ENCODE measurements at regions of chr7 and their contacts with region 1.

Region 1: DNA sequence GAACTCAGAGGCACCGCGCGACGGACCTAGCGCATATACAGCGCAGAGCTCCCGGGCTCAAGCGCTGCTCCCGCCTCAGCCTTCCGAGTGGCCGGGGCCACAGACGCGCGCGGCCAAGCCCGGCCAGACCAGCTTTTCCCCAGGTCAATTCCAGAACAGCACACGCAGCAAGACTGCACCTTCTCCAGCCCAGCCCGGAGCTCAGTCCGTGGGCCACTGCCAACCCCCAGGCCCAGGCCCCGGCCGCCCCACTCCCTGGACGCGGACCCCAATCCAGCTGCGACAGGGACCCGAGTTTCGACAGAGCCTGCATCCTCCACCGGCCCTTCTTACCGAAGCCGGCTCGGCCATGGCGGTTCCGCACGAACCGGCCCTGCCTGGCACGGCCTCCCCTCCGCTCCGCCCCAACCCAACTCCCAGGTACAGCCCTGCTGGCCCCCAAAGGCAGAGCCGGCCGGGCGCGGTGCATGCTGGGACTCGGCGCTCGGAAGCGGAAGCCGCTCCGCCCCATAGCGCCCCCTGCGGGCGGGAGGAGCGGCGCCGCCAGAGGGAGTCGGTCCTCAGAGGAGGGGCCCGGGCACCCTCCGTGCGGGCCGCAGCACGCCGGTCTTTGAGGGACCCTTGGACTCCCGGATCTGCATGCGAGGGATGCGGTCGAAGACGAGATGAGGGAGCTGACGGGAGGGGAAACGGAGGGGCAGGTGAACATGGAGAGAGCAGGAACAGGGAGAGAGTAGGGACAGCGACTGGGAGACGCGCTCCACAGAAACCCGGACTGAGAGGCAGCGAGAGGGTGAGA is at the start of gene ZNF425:
- DNase-seq: peak; percentile 99
- H3K4me3 ChIP-seq: peak within 1 kb of the TSS; percentile 60 to 96
- H3K27ac ChIP-seq: peak within 1 kb of the TSS; percentile 83 to 90
- H3K4me1 ChIP-seq: peaks cover 8% of the 10 kb centered on the region in 2 experiments; a peak in 3 of 4 replicates
- H3K27me3 ChIP-seq: no peaks in the 10 kb centered on the region
- CTCF ChIP-seq: peak; percentile 97
- EP300 ChIP-seq: peak in 1 of 2 experiments; percentile 6; a peak in 2 of 4 replicates
- RAD21 ChIP-seq: peak; percentile 35
- polyA plus RNA-seq, gene ZNF425: 1.4 and 1.6 TPM in 2 replicates

Region 2: DNA sequence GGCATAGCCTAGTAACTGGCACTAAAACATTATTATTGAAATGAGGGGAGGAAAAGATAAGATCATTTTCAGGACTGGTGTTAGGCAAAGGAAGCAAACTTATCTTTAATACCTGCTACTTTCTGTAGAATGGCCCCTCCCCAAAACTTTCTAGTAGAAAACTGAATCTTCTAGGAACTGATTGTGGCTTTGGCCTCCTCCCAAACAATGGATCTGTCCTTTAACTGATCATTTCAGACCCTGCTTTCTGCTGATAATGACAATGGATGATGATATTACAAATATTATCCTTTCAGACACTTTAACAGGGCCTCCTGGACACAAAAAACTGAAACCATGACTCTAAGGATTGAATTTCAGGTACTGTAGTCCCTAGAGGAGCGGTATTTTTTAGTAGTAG is 297.1 kb before region 1 on chr7:
- CTCF ChIA-PET with region 1: no interaction called
- POLR2A ChIA-PET with region 1: no interaction called
- DNase-seq: no peak
- H3K4me3 ChIP-seq: no peak overlapping the region
- H3K27ac ChIP-seq: no peak overlapping the region
- H3K4me1 ChIP-seq: no peaks in the 10 kb centered on the region
- H3K27me3 ChIP-seq: no peaks in the 10 kb centered on the region
- CTCF ChIP-seq: no peak
- EP300 ChIP-seq: no peak
- RAD21 ChIP-seq: no peak

Region 3: GRCh38 chr7:149071641-149072437 is 54.2 kb before region 1 on chr7:
- CTCF ChIA-PET with region 1: interaction called, 14 read pairs
- POLR2A ChIA-PET with region 1: no interaction called
- DNase-seq: peak; percentile 61
- H3K4me3 ChIP-seq: no peak overlapping the region
- H3K27ac ChIP-seq: no peak overlapping the region
- H3K4me1 ChIP-seq: no peaks in the 10 kb centered on the region
- H3K27me3 ChIP-seq: no peaks in the 10 kb centered on the region
- CTCF ChIP-seq: no peak
- EP300 ChIP-seq: no peak
- RAD21 ChIP-seq: 0 out of 2 replicates have a peak, but pooled peaks have one; percentile 39

Region 4: DNA sequence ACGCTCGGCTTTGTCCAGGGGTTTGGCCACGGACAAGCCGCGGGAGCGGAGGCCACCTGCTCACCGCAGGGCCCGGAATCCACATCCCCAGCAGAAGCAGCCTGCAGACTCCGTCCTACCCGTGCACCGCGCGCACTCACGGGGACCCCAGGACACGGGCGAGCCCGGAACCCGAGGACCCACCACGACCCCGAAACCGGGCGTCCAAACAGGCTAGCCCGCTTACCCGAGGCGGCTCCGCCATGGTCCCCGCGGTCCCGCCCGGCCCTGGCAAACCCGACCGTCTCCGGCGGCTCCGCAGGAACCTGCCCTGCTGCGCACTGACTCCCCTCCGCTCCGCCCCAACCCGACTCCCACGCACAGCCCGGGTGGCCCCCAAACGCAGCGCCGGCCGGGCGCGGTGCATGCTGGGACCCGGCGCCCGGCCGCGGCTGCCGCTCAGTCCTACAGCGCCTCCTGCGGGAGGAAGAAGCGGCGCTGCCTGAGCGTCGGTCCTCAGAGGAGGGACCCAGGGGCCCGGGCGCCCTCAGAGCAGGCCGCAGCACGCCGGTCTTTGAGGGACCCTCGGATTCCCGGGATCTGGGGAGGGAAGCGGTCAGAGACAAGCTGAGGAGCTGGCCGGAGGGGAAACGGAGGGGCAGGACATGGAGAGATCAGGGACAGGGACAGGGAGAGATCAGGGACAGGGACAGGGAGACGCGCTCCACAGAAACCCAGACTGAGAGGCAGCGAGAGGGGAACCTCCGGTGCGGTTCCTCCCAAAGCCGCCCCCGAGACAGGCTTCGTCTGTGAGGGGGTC is 35.5 kb before region 1 on chr7 and contains the start of gene ZNF786:
- CTCF ChIA-PET with region 1: interaction called, 10 read pairs
- POLR2A ChIA-PET with region 1: interaction called, 3 read pairs
- DNase-seq: peak; percentile 99
- H3K4me3 ChIP-seq: peak within 1 kb of the TSS; percentile 67 to 94
- H3K27ac ChIP-seq: peak within 1 kb of the TSS; percentile 83 to 91
- H3K4me1 ChIP-seq: no peaks in the 10 kb centered on the region; a peak in 1 of 4 replicates
- H3K27me3 ChIP-seq: no peaks in the 10 kb centered on the region
- CTCF ChIP-seq: peak; percentile 95
- EP300 ChIP-seq: 0 out of 4 replicates have a peak, but pooled peaks have one; percentile 6 to 23
- RAD21 ChIP-seq: peak; percentile 88
- polyA plus RNA-seq, gene ZNF786: 5.0 and 5.9 TPM in 2 replicates

Region 5: GRCh38 chr7:149099058-149099457 is 27.0 kb before region 1 on chr7:
- CTCF ChIA-PET with region 1: interaction called, 10 read pairs
- POLR2A ChIA-PET with region 1: interaction called, 4 read pairs
- DNase-seq: no peak
- H3K4me3 ChIP-seq: no peak overlapping the region
- H3K27ac ChIP-seq: no peak overlapping the region
- H3K4me1 ChIP-seq: no peaks in the 10 kb centered on the region
- H3K27me3 ChIP-seq: no peaks in the 10 kb centered on the region
- CTCF ChIP-seq: no peak
- EP300 ChIP-seq: no peak
- RAD21 ChIP-seq: no peak

Region 6: GRCh38 chr7:149104749-149105148 is 21.3 kb before region 1 on chr7:
- CTCF ChIA-PET with region 1: interaction called, 13 read pairs
- POLR2A ChIA-PET with region 1: interaction called, 4 read pairs
- DNase-seq: no peak
- H3K4me3 ChIP-seq: no peak overlapping the region
- H3K27ac ChIP-seq: no peak overlapping the region
- H3K4me1 ChIP-seq: no peaks in the 10 kb centered on the region
- H3K27me3 ChIP-seq: no peaks in the 10 kb centered on the region
- CTCF ChIP-seq: no peak
- EP300 ChIP-seq: no peak
- RAD21 ChIP-seq: no peak

Region 7: DNA sequence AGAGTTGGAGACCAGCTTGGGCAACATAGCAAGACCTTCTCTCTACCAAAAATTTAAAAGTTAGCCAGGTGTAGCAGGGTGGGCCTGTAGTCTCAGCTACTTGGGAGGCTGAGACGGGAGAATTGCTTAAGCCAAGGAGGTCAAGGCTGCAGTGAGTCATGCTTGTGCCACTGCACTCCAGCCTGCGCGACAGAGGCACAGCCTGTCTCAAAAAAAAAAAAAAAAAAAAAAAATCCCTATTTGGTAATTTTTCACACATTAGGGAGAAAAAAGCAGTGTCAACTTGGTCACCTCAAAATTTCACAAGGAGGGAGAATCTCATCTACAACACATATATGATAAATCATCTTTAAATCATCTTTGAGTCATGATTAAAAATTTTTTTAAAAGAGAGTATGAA is 14.8 kb after region 1 on chr7:
- CTCF ChIA-PET with region 1: interaction called, 73 read pairs
- POLR2A ChIA-PET with region 1: interaction called, 37 read pairs
- DNase-seq: no peak
- H3K4me3 ChIP-seq: no peak overlapping the region
- H3K27ac ChIP-seq: no peak overlapping the region
- H3K4me1 ChIP-seq: no peaks in the 10 kb centered on the region; a peak in 1 of 4 replicates
- H3K27me3 ChIP-seq: no peaks in the 10 kb centered on the region
- CTCF ChIP-seq: no peak
- EP300 ChIP-seq: no peak
- RAD21 ChIP-seq: no peak

Region 8: GRCh38 chr7:149154030-149154429 is 28.0 kb after region 1 on chr7:
- CTCF ChIA-PET with region 1: interaction called, 73 read pairs
- POLR2A ChIA-PET with region 1: interaction called, 37 read pairs
- DNase-seq: no peak
- H3K4me3 ChIP-seq: no peak overlapping the region
- H3K27ac ChIP-seq: no peak overlapping the region
- H3K4me1 ChIP-seq: no peaks in the 10 kb centered on the region; a peak in 1 of 4 replicates
- H3K27me3 ChIP-seq: no peaks in the 10 kb centered on the region
- CTCF ChIP-seq: no peak
- EP300 ChIP-seq: no peak
- RAD21 ChIP-seq: no peak

Measured in SK-N-SH (cell line).